Mammary epithelial cell (primary cell): ENCODE measurements at regions of chr3 and their contacts with region 1.

Region 1: GRCh38 chr3:171829841-171830517 is 13.2 kb upstream of the TMEM212 start:
- DNase-seq: peak; percentile 83
- H3K4me3 ChIP-seq: no peak overlapping the region
- H3K27ac ChIP-seq: no peak overlapping the region
- H3K4me1 ChIP-seq: peaks cover 4% of the 10 kb centered on the region
- H3K27me3 ChIP-seq: no peaks in the 10 kb centered on the region
- CTCF ChIP-seq: peak; percentile 74 to 97

Region 2: DNA sequence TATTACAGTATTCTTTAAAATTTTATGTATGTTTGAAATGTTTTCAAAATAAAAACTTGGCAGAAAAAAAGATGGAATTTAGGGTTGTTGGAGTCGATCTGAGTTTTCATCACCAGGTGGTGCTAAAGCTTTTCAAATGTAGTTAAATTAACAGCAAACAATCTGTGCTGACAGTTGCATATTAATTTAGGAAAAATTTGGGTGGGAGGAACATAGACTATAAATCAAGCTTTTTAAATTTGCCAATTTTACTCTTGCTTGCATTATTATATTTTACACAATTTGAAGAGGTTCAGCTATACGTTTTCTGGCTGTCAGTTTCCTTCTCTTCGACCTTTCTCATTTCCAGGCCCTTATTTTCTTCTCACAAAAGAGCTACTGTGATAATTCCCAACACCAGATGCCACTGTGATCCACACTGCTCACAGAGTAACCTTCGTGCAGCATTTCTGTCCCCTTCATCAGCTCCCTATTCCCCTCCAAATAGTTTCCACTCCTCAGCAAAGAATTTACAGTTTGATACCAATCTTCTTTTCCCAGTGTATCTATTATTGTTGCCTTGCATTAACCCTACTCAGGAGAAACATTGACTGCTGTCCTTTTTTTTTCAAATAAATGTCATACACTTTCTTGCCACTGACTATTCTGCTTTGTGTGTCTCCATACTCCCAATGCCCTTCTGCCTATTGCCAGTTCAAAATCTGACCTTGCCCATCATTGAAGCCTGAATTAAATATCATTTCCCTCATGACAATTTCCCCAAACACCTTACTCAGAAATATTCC is 868.2 kb before region 1 on chr3:
- CTCF ChIA-PET with region 1: interaction called, 3 read pairs
- dilution Hi-C with region 1: no loop called
- in situ Hi-C with region 1: loop called in 1 of 2 experiments (anchors 25 kb)
- intact Hi-C with region 1: loop called (anchors 2 kb)
- DNase-seq: peak; percentile 12
- H3K4me3 ChIP-seq: no peak overlapping the region
- H3K27ac ChIP-seq: no peak overlapping the region
- H3K4me1 ChIP-seq: no peaks in the 10 kb centered on the region
- H3K27me3 ChIP-seq: no peaks in the 10 kb centered on the region
- CTCF ChIP-seq: peak; percentile 49 to 58

Region 3: DNA sequence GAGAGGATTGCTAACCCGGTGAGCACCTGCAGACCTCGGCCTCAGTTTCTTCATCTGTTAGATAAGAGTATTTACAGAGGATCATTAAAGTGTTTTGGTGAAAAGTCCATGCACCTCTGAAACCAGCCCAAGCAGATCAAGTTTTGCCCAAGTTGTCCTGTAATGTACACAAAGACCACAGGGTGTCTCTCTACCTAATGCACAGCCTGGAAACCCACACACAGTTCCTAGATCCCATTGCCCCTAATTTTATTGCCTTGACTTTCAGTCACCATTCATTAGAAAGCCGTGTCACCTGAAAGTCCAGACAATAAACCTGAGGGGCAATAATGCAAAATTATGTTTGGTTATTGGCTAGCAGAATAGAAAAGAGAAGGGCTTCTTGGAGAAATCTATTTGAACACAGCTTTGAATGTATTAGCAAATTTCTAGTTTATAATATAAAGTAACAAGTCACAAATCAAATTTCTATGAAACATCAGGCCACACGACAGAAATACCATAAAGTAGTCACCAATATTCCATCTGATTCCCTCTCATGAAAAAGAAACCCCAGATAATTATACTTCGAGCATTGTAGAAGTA is 642.2 kb before region 1 on chr3:
- CTCF ChIA-PET with region 1: no interaction called
- dilution Hi-C with region 1: no loop called
- in situ Hi-C with region 1: no loop called
- intact Hi-C with region 1: loop called (anchors 10 kb)
- DNase-seq: no peak
- H3K4me3 ChIP-seq: no peak overlapping the region
- H3K27ac ChIP-seq: no peak overlapping the region
- H3K4me1 ChIP-seq: no peaks in the 10 kb centered on the region
- H3K27me3 ChIP-seq: no peaks in the 10 kb centered on the region
- CTCF ChIP-seq: peak; percentile 53 to 78

Region 4: GRCh38 chr3:171620825-171621434 is 209.0 kb before region 1 on chr3:
- CTCF ChIA-PET with region 1: no interaction called
- dilution Hi-C with region 1: no loop called
- in situ Hi-C with region 1: no loop called
- intact Hi-C with region 1: no loop called
- DNase-seq: peak; percentile 11
- H3K4me3 ChIP-seq: no peak overlapping the region
- H3K27ac ChIP-seq: no peak overlapping the region
- H3K4me1 ChIP-seq: no peaks in the 10 kb centered on the region
- H3K27me3 ChIP-seq: no peaks in the 10 kb centered on the region
- CTCF ChIP-seq: no peak

Region 5: GRCh38 chr3:171646357-171647133 is 183.4 kb before region 1 on chr3:
- CTCF ChIA-PET with region 1: interaction called, 5 read pairs
- dilution Hi-C with region 1: no loop called
- in situ Hi-C with region 1: loop called (anchors 5 kb)
- intact Hi-C with region 1: loop called (anchors 1 kb)
- DNase-seq: peak; percentile 46
- H3K4me3 ChIP-seq: no peak overlapping the region
- H3K27ac ChIP-seq: no peak overlapping the region
- H3K4me1 ChIP-seq: no peaks in the 10 kb centered on the region
- H3K27me3 ChIP-seq: no peaks in the 10 kb centered on the region
- CTCF ChIP-seq: peak; percentile 57 to 66

Region 6: DNA sequence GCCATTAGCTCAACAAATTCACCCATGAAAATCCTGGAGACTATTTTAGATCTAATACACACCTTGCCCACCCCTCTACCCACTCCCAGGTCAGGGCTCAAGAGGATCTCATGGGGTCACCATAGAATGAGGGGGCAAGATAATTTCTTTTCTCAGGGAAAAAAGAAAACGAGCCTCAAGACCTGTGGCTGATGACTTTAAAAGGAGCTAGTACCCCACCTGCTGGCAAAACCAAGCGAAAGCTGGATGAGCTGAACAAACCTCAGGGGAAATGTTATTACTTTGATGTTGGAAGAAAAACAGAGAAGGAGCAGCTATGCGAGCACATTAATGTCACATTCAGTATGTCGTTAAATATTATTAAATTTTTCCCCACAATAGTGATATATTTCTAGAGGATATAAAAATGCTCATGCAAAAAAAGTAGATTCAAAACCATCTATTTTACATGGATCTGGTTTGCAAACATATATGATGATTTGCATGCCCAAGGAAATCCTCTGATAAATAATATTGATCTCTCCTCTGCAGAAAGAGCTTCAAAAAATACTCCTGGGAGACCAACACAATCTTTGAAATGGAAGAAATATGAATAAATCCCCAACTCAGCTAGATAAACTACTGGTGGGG is 57.4 kb before region 1 on chr3:
- CTCF ChIA-PET with region 1: interaction called, 17 read pairs
- dilution Hi-C with region 1: no loop called
- in situ Hi-C with region 1: no loop called
- intact Hi-C with region 1: loop called (anchors 1 kb)
- DNase-seq: peak; percentile 60
- H3K4me3 ChIP-seq: no peak overlapping the region
- H3K27ac ChIP-seq: peak overlapping the region; percentile 83
- H3K4me1 ChIP-seq: peaks cover 32% of the 10 kb centered on the region
- H3K27me3 ChIP-seq: no peaks in the 10 kb centered on the region
- CTCF ChIP-seq: peak; percentile 80 to 87

Region 7: GRCh38 chr3:172341482-172342059 is 511.6 kb after region 1 on chr3:
- CTCF ChIA-PET with region 1: no interaction called
- dilution Hi-C with region 1: no loop called
- in situ Hi-C with region 1: no loop called
- intact Hi-C with region 1: loop called (anchors 2 kb)
- DNase-seq: peak; percentile 50
- H3K4me3 ChIP-seq: no peak overlapping the region
- H3K27ac ChIP-seq: no peak overlapping the region
- H3K4me1 ChIP-seq: no peaks in the 10 kb centered on the region
- H3K27me3 ChIP-seq: no peaks in the 10 kb centered on the region
- CTCF ChIP-seq: peak; percentile 52 to 59